CD4-positive, alpha-beta memory T cell (primary cell): ENCODE measurements at regions of chr1 and their contacts with region 1.

Region 1: DNA sequence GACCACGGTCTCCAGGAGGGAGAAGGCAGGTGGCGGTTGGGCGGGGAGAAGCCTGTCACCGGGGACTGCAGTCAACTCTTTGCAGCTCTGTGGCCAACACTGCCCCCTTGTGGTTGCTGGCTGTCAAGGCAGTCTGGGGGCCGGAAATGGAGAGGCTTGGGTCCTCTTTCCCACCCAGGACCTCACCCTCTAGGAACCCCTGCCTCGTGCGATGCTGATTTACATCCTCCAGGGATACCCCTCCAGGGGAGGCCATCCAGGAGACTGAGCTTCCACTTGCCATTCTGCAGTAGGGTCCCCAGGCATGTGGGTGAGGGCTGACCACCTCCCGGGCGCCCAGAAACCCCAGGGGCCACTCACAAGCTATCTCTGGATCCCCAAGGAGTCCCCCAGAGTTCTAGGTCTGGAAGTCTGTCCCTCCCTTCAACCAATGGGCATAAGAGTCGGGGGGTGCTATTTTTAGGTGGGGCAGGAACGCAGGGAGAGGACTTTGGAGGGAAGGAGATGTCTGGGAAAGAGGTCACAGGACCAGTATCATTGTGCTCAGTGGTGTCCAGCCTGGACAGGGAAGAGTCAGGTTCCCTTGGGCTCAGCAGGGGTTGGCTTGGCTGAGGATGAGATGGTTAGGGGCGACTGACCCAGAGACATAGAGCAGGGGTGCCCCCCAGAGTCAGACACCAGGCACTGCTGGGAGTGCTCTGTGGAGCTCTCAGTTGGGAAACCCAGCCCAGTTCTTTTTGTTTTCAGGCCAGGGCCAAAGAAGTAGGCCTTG is 7.1 kb upstream of the GPR61 start:
- DNase-seq: peak; percentile 84 to 90 (median 86)
- H3K4me3 ChIP-seq: peak overlapping the region; percentile 55 to 71
- H3K4me3 Mint-ChIP-seq: peak overlapping the region; percentile 77 to 91 (median 86)
- H3K27ac ChIP-seq: peak overlapping the region; percentile 29
- H3K27ac Mint-ChIP-seq: peak overlapping the region; percentile 61 to 96 (median 89)
- H3K4me1 ChIP-seq: peaks cover 25% of the 10 kb centered on the region
- H3K4me1 Mint-ChIP-seq: peaks cover 15 to 37% (median 25%) of the 10 kb centered on the region in 4 donors
- H3K27me3 ChIP-seq: no peaks in the 10 kb centered on the region
- H3K27me3 Mint-ChIP-seq: peaks cover 0 to 2% of the 10 kb centered on the region in 2 donors

Region 2: DNA sequence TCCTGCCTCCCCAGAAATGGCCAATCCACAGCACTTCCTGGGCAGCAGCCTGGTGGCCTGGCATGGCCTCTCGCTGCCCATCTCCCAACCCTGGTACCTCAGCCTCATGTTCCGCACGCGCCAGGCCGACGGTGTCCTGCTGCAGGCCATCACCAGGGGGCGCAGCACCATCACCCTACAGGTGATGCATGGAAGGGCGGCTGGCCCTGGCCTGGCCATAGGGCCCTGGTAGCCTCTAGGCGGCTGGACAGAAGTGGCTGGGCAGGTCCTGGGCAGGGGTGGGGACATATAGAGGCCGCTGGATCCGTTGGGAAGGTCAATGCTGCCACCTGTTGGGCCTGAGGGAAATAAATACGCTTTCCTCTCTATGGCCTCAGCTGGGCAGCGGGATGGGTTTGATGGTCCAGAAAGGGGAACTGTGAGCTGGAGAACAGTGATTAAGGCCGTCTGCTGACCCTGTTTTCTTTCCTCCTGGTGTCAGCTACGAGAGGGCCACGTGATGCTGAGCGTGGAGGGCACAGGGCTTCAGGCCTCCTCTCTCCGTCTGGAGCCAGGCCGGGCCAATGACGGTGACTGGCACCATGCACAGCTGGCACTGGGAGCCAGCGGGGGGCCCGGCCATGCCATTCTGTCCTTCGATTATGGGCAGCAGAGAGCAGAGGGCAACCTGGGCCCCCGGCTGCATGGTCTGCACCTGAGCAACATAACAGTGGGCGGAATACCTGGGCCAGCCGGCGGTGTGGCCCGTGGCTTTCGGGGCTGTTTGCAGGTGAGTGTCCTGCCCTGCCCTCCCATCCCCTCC is 268.8 kb before region 1 on chr1:
- CTCF ChIA-PET with region 1: interaction called, 45 read pairs
- POLR2A ChIA-PET with region 1: no interaction called
- intact Hi-C with region 1: loop called (anchors 1 kb)
- DNase-seq: peak; percentile 59 to 70 (median 67)
- H3K4me3 ChIP-seq: no peak overlapping the region
- H3K4me3 Mint-ChIP-seq: no peak overlapping the region
- H3K27ac ChIP-seq: no peak overlapping the region
- H3K27ac Mint-ChIP-seq: peak overlapping the region in 1 of 7 donors; percentile 75
- H3K4me1 ChIP-seq: no peaks in the 10 kb centered on the region
- H3K4me1 Mint-ChIP-seq: peaks cover 0 to 4% (median under 1%) of the 10 kb centered on the region in 4 donors
- H3K27me3 ChIP-seq: no peaks in the 10 kb centered on the region
- H3K27me3 Mint-ChIP-seq: peaks cover 0 to 2% of the 10 kb centered on the region in 2 donors

Region 3: DNA sequence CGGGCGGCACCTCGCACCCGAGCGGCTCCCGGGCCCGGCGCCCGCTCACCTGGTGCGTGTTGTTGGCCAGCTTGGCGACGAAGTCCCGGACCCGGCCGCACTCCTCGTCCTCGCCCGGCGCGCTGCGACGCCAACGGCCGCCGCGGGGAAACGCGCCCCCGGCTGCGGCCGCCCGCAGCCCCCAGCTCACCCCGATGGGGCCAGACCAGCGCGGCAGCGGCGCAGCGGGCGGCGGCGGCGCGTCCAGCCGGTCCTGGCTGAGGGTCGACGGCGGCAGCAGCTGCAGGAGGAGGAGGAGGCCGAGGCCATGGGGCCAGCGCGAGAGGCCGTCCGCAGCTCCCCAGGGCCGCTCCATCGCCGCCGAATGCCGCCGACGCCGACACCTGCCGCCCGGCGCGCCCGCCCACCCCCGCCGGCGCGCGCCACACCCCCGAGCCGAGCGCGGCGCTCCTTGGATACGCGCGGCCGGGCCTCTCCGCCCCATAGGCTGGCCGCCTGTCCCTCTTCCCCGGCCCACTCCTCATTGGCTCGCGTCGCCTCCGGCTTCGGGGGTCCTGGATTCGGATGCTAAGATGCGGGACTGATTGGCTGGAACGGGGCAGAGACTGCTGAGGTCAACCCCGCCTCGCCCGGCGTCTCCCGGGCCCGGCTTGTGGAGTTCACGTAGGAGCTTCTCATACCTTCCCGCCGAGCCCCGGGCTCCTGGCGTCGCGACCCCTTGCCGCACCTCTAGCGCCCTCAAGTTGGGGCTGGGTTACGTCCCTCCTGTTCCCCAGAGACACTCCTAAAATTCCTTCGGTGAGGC is 134.8 kb before region 1 on chr1 and contains the start of gene SORT1:
- CTCF ChIA-PET with region 1: interaction called, 17 read pairs
- POLR2A ChIA-PET with region 1: interaction called, 4 read pairs
- intact Hi-C with region 1: loop called (anchors 1 kb)
- DNase-seq: peak; percentile 35 to 50 (median 40)
- H3K4me3 ChIP-seq: no peak within 1 kb of the TSS
- H3K4me3 Mint-ChIP-seq: peak within 1 kb of the TSS; percentile 70 to 86 (median 84)
- H3K27ac ChIP-seq: no peak within 1 kb of the TSS
- H3K27ac Mint-ChIP-seq: peak within 1 kb of the TSS in 2 of 7 donors; percentile 29 to 53
- H3K4me1 ChIP-seq: peaks cover 14% of the 10 kb centered on the region
- H3K4me1 Mint-ChIP-seq: peaks cover 5 to 15% (median 9%) of the 10 kb centered on the region in 4 donors
- H3K27me3 ChIP-seq: peaks cover 37% of the 10 kb centered on the region
- H3K27me3 Mint-ChIP-seq: peaks cover 30 to 31% of the 10 kb centered on the region in 2 donors
- total RNA-seq, gene SORT1: 0.69 to 0.93 TPM

Region 4: DNA sequence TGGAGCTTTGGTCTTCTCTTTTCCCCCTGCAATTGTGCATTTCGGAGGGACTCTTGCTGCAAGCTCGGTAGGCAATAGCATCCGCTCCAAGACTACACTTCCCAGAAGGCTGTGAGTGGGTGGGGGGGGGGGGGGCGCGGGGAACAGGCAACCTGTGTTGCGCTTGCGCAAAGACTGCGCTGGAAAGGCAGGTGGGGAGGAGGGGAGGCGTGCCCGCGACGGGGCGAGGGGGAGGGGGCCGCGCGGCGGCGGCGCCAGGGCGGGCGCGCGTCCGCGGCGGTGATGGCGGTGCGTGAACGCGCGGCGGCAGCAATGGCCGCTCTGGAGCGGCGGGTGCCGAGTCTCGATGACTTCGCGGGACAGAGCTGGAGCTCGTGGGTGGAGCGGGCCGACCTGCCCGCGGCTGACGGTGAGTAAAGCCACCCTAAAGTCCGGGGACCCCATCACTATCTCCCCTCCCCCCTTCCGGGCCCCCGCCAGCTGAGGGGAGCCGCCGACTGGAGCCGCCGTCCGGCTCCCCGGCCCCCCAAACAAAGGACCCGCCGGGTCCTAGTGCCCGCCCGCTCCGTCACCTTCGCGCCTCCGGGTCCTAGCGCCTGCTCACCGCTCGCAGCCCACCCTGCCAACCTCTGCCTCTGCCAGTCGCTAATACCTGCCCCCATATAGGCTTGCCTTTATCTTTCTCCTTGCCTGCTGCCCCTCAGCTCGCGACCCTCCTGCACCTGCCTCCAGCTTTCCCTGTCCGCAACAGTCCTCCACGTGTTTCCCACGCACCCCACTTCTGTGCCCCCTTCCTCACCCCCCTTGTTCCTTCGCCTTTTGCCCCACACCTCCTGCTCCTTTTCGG is 48.7 kb before region 1 on chr1 and contains the start of gene ATXN7L2:
- CTCF ChIA-PET with region 1: interaction called, 1,669 read pairs
- POLR2A ChIA-PET with region 1: interaction called, 438 read pairs
- intact Hi-C with region 1: no loop called
- DNase-seq: peak; percentile 92 to 95 (median 93)
- H3K4me3 ChIP-seq: peak within 1 kb of the TSS; percentile 95 to 98
- H3K4me3 Mint-ChIP-seq: peak within 1 kb of the TSS; percentile 91 to 96 (median 94)
- H3K27ac ChIP-seq: peak within 1 kb of the TSS; percentile 76
- H3K27ac Mint-ChIP-seq: peak within 1 kb of the TSS; percentile 86 to 97 (median 92)
- H3K4me1 ChIP-seq: peaks cover 20% of the 10 kb centered on the region
- H3K4me1 Mint-ChIP-seq: peaks cover 17 to 42% (median 30%) of the 10 kb centered on the region in 4 donors
- H3K27me3 ChIP-seq: peaks cover 4% of the 10 kb centered on the region
- H3K27me3 Mint-ChIP-seq: peaks cover 0 to 5% of the 10 kb centered on the region in 2 donors
- total RNA-seq, gene ATXN7L2: 7.4 to 9.0 TPM

Region 5: DNA sequence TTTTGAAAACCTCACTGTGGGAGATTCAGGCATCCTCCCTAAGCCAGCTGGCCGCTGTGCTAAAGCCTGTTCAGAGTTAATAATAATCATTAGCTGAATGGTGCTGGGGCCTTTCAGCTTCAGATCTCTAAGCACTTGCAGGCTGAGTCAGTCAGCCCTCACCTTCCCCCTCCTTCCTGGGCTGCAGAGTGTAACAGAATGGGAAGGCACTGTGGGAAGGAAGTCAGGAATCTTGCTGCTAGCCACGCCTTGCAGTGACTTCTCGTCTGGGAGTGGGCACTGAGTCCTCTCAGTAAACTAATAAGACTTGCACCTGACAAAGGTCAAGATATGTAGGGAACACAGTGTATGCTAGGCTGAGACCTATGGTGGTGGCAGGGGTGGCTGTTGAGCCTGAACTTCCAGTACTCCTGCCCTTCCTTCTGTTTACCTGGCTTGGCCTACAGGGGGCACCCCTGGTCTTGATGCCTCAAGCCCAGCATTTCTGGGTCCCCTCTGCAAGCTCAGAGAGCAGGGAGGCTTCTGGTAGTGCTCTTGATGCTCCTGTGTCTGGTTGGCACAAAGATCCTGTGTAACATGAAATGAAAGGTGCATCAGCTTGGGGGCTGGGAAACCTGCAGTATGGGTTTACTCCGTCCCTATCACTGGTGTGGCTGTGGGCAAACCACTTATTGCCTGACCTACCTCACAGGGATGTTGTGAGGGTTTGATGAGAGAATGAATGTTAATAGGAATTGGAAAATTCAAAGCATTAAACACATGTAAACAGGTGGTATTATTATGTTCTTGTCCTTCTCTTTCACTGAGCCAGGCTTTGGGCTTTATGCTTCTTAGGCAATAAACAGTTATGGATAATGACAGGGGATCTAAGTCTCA is 32.7 kb before region 1 on chr1:
- CTCF ChIA-PET with region 1: interaction called, 1,669 read pairs
- POLR2A ChIA-PET with region 1: interaction called, 438 read pairs
- intact Hi-C with region 1: loop called (anchors 1 kb)
- DNase-seq: peak; percentile 58 to 69 (median 61)
- H3K4me3 ChIP-seq: no peak overlapping the region
- H3K4me3 Mint-ChIP-seq: peak overlapping the region; percentile 52 to 75 (median 62)
- H3K27ac ChIP-seq: peak overlapping the region; percentile 86
- H3K27ac Mint-ChIP-seq: peak overlapping the region; percentile 70 to 97 (median 92)
- H3K4me1 ChIP-seq: peaks cover 98% of the 10 kb centered on the region
- H3K4me1 Mint-ChIP-seq: peaks cover 68 to 97% (median 86%) of the 10 kb centered on the region in 4 donors
- H3K27me3 ChIP-seq: no peaks in the 10 kb centered on the region
- H3K27me3 Mint-ChIP-seq: no peaks in the 10 kb centered on the region

Region 6: DNA sequence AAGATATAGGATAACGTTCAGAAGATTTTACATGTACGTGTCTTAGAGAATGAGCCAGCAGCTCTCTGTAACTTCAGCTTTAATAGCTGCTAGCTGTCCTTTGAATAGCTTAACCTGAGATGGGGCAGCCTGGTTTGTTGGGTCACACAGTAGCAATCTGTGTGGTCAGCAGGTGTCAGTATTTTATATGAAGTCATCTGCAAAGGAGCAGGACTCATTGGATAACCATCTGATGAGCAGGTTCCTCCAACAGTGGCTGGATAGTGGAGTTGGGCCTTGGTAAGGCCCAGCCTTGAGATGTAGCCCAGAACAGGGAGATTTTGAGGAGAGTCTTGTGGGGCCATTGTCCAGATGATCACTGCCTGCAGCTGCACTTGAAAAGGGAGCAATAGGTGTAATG is 185.9 kb after region 1 on chr1:
- CTCF ChIA-PET with region 1: no interaction called
- POLR2A ChIA-PET with region 1: no interaction called
- intact Hi-C with region 1: no loop called
- DNase-seq: no peak
- H3K4me3 ChIP-seq: no peak overlapping the region
- H3K4me3 Mint-ChIP-seq: no peak overlapping the region
- H3K27ac ChIP-seq: no peak overlapping the region
- H3K27ac Mint-ChIP-seq: no peak overlapping the region
- H3K4me1 ChIP-seq: no peaks in the 10 kb centered on the region
- H3K4me1 Mint-ChIP-seq: no peaks in the 10 kb centered on the region
- H3K27me3 ChIP-seq: no peaks in the 10 kb centered on the region
- H3K27me3 Mint-ChIP-seq: peaks cover 8 to 18% of the 10 kb centered on the region in 2 donors